ENCODE measurements at regions of chr1 and their contacts with region 1.

Region 1: GRCh38 chr1:65687428-65688214 is 105.1 kb upstream of the PDE4B start:
- DNase-seq: peak; percentile 84 to 89
- H3K4me3 ChIP-seq: no peak overlapping the region
- H3K4me3 Mint-ChIP-seq: no peak overlapping the region
- H3K27ac Mint-ChIP-seq: no peak overlapping the region
- H3K4me1 ChIP-seq: peaks cover 17% of the 10 kb centered on the region
- H3K4me1 Mint-ChIP-seq: no peaks in the 10 kb centered on the region
- H3K27me3 ChIP-seq: no peaks in the 10 kb centered on the region
- H3K27me3 Mint-ChIP-seq: no peaks in the 10 kb centered on the region
- CTCF ChIP-seq: peak; percentile 68 to 79

Region 2: GRCh38 chr1:64171797-64172281 is 1515.8 kb before region 1 on chr1:
- CTCF ChIA-PET with region 1: no interaction called
- POLR2A ChIA-PET with region 1: no interaction called
- intact Hi-C with region 1: loop called (anchors 10 kb)
- DNase-seq: no peak
- H3K4me3 ChIP-seq: no peak overlapping the region
- H3K4me3 Mint-ChIP-seq: no peak overlapping the region
- H3K27ac Mint-ChIP-seq: peak overlapping the region; percentile 35
- H3K4me1 ChIP-seq: peaks cover 14% of the 10 kb centered on the region; the same call in 1 of the 2 replicates
- H3K4me1 Mint-ChIP-seq: peaks cover 12% of the 10 kb centered on the region
- H3K27me3 ChIP-seq: no peaks in the 10 kb centered on the region
- H3K27me3 Mint-ChIP-seq: no peaks in the 10 kb centered on the region
- CTCF ChIP-seq: no peak

Region 3: GRCh38 chr1:65148548-65149350 is 538.9 kb before region 1 on chr1:
- CTCF ChIA-PET with region 1: no interaction called
- POLR2A ChIA-PET with region 1: no interaction called
- intact Hi-C with region 1: loop called (anchors 5 kb)
- DNase-seq: peak; percentile 44 to 50
- H3K4me3 ChIP-seq: peak overlapping the region; percentile 81
- H3K4me3 Mint-ChIP-seq: peak overlapping the region; percentile 79
- H3K27ac Mint-ChIP-seq: peak overlapping the region; percentile 57
- H3K4me1 ChIP-seq: peaks cover 28% of the 10 kb centered on the region
- H3K4me1 Mint-ChIP-seq: peaks cover 10% of the 10 kb centered on the region
- H3K27me3 ChIP-seq: no peaks in the 10 kb centered on the region
- H3K27me3 Mint-ChIP-seq: no peaks in the 10 kb centered on the region
- CTCF ChIP-seq: no peak

Region 4: DNA sequence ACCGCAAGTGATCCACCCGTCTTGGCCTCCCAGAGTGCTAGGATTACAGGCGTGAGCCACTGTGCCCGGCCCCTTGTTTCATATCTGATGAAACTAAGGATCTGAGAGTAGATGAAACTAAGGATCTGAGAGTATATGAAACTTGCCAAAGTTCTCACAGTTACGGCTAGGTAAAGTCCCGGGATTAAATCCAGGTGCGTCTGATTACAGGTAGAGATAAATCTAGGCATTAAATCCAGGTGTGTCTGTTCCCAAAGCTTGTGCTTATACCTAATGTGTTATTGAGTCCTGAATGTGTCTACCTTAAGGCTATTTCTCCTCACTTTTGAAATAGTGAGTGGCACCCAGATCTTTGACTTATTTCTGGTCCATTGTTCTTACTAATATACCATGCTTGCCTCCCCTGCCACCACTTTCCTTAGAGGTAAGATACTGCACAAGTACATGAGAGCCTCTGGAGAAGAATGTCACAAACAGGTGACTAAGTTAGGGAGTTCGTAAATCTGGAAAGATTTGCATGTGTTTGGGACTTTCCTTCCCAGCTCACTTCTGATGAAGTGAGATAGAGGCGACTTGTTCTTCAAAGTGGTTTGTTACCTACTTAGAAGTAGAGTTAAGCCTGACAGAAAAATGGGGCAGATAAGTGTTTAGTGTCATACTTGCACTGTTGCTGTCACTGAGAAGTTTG is 473.1 kb before region 1 on chr1:
- CTCF ChIA-PET with region 1: interaction called, 8 read pairs
- POLR2A ChIA-PET with region 1: no interaction called
- intact Hi-C with region 1: loop called (anchors 1 kb)
- DNase-seq: no peak
- H3K4me3 ChIP-seq: no peak overlapping the region
- H3K4me3 Mint-ChIP-seq: no peak overlapping the region
- H3K27ac Mint-ChIP-seq: no peak overlapping the region
- H3K4me1 ChIP-seq: no peaks in the 10 kb centered on the region; the same call in 1 of the 2 replicates
- H3K4me1 Mint-ChIP-seq: peaks cover 18% of the 10 kb centered on the region
- H3K27me3 ChIP-seq: no peaks in the 10 kb centered on the region
- H3K27me3 Mint-ChIP-seq: no peaks in the 10 kb centered on the region
- CTCF ChIP-seq: no peak

Region 5: GRCh38 chr1:65309304-65310077 is 378.1 kb before region 1 on chr1 and contains the start of gene DNAJC6:
- CTCF ChIA-PET with region 1: interaction called, 6 read pairs
- POLR2A ChIA-PET with region 1: no interaction called
- intact Hi-C with region 1: loop called (anchors 2 kb)
- DNase-seq: peak; percentile 57 to 85
- H3K4me3 ChIP-seq: peak within 1 kb of the TSS; percentile 41
- H3K4me3 Mint-ChIP-seq: peak within 1 kb of the TSS; percentile 71
- H3K27ac Mint-ChIP-seq: no peak within 1 kb of the TSS
- H3K4me1 ChIP-seq: no peaks in the 10 kb centered on the region; the same call in 1 of the 2 replicates
- H3K4me1 Mint-ChIP-seq: peaks cover 5% of the 10 kb centered on the region
- H3K27me3 ChIP-seq: no peaks in the 10 kb centered on the region
- H3K27me3 Mint-ChIP-seq: no peaks in the 10 kb centered on the region
- CTCF ChIP-seq: no peak
- total RNA-seq, gene DNAJC6: 4.0 and 6.2 TPM in 2 replicates

Region 6: DNA sequence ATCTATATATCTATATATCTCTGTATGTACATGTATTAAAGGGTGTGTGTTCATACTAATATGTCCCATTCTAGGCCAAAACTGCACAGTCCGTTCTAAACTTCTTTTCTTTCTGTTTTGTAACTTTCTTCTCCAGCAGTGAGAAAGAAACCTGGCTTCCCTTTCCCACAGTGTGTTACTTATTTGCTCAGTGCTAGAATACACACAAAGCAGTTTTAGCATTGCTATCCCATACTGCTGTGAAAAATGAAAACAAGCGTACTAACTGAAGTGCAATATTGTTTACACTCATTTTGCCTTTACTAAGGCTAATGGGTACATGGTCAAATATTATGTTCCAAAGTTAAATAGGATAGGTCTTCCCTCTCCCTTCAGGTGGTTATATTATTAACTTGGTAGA is 103.2 kb before region 1 on chr1:
- CTCF ChIA-PET with region 1: no interaction called
- POLR2A ChIA-PET with region 1: no interaction called
- intact Hi-C with region 1: no loop called
- DNase-seq: no peak
- H3K4me3 ChIP-seq: no peak overlapping the region
- H3K4me3 Mint-ChIP-seq: no peak overlapping the region
- H3K27ac Mint-ChIP-seq: no peak overlapping the region
- H3K4me1 ChIP-seq: no peaks in the 10 kb centered on the region
- H3K4me1 Mint-ChIP-seq: no peaks in the 10 kb centered on the region
- H3K27me3 ChIP-seq: no peaks in the 10 kb centered on the region
- H3K27me3 Mint-ChIP-seq: no peaks in the 10 kb centered on the region
- CTCF ChIP-seq: no peak

Region 7: DNA sequence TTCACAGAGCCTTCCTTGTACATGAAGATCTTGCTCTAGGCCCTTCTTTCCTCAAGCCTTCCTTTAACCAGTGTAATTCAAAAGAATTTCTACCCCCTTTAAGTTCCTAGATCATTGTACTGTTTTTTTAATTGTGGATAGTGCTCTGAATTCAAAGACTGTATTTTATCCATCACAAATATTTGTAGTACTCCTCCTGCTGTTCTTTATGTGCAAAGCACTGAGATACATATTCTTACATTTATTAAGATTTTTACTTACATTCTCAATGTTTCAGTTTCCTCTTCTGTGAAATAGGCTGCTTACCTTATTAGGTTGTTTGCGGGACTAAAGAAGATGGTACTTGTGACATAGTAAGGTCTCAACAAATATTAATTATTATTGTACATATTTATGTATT is 63.7 kb before region 1 on chr1:
- CTCF ChIA-PET with region 1: no interaction called
- POLR2A ChIA-PET with region 1: no interaction called
- intact Hi-C with region 1: loop called (anchors 5 kb)
- DNase-seq: no peak
- H3K4me3 ChIP-seq: no peak overlapping the region
- H3K4me3 Mint-ChIP-seq: no peak overlapping the region
- H3K27ac Mint-ChIP-seq: no peak overlapping the region
- H3K4me1 ChIP-seq: peaks cover 17% of the 10 kb centered on the region
- H3K4me1 Mint-ChIP-seq: peaks cover 22% of the 10 kb centered on the region
- H3K27me3 ChIP-seq: no peaks in the 10 kb centered on the region
- H3K27me3 Mint-ChIP-seq: no peaks in the 10 kb centered on the region
- CTCF ChIP-seq: no peak

Measured in Caco-2 (cell line).